ENCODE measurements at regions of chr2 and their contacts with region 1.

Region 1: DNA sequence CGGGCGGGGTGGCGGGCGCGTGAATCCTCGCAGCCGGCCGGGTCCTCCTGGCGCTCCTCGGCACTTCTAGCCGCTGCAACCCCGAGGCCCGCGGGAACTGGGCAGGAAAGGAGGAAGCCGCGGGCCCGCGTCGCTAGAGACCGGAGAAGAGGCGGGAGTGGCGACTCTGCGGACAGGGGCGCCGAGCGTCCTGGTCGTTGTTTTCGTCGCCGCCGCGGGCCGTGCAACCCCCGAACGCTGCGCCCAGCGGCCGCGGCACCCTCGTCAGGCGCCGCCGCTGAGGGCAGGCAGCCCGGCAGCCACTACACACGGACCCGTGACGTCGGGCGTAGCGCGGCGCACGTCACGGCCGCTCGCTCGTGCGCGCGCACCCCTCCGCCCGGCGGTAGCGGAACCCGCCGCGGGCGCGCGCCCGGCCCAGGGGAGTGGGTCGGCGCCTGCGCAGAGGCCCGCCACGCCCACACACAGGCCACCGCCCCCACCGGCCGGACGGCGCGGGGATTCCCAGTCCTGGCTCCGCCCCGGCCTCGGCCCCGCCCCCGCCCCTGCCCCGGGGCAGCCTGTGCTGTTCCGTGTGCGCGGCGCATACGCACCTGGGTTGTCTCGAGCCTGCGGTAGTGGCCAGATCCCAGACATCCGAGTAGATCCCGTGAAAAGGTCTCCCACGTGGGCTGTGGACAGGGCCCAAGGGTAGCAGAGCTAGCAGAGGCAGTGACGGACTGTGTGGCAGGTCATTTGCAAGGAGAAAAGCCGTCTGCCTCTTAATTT is at the start of gene MAP3K2:
- DNase-seq: peak; percentile 94 to 98
- ATAC-seq: peak; percentile 76 to 90 (median 76)
- H3K4me3 ChIP-seq: peak within 1 kb of the TSS; percentile 95
- H3K4me3 Mint-ChIP-seq: peak within 1 kb of the TSS; percentile 92
- H3K27ac ChIP-seq: peak within 1 kb of the TSS; percentile 100
- H3K27ac Mint-ChIP-seq: peak within 1 kb of the TSS; percentile 96 to 97
- H3K4me1 ChIP-seq: peaks cover 29% of the 10 kb centered on the region
- H3K4me1 Mint-ChIP-seq: peaks cover 45 to 46% of the 10 kb centered on the region in 2 donors
- H3K27me3 ChIP-seq: no peaks in the 10 kb centered on the region
- H3K27me3 Mint-ChIP-seq: no peaks in the 10 kb centered on the region
- CTCF ChIP-seq: no peak
- total RNA-seq, gene MAP3K2: 99.4 to 109 (median 106) TPM

Region 2: DNA sequence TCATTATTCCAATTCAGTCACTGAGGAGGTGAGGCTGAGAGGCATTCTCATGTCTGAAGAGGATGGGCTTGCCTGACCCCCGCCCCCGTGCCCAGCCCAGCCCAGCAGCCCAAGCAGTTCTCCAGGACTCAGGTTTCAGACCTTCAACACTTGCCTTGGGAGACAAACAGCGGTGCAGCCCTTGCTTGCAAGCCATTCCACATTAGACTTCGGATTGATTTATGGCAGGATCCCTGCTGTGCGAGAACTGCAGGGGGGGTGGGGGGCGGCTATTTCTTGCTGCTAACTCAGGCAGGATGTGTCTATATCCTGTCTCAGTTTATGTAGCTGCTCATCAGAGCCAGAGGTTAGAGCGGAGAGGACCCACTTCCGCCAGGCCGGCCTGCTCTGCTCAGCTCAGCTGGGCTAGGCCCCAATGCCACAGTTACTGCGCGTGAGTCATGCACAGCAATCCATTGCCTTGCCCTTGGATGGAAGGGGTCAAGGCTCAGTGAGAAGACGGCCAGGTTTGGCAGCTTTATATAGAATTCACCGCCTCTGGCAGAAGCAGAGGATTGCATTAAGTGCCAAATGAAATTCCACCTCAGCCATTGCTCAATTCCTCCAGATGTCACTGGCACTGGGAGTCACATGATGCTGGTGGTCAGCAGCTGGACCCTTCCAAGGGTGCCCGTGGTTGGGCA is 730.1 kb before region 1 on chr2:
- intact Hi-C with region 1: loop called (anchors 5 kb)
- DNase-seq: peak; percentile 68 to 84
- ATAC-seq: peak; percentile 73 to 87 (median 84)
- H3K4me3 ChIP-seq: peak overlapping the region; percentile 81
- H3K4me3 Mint-ChIP-seq: peak overlapping the region; percentile 94
- H3K27ac ChIP-seq: peak overlapping the region; percentile 93
- H3K27ac Mint-ChIP-seq: peak overlapping the region; percentile 89 to 97
- H3K4me1 ChIP-seq: peaks cover 68% of the 10 kb centered on the region
- H3K4me1 Mint-ChIP-seq: peaks cover 72 to 73% of the 10 kb centered on the region in 2 donors
- H3K27me3 ChIP-seq: no peaks in the 10 kb centered on the region
- H3K27me3 Mint-ChIP-seq: no peaks in the 10 kb centered on the region
- CTCF ChIP-seq: no peak

Region 3: DNA sequence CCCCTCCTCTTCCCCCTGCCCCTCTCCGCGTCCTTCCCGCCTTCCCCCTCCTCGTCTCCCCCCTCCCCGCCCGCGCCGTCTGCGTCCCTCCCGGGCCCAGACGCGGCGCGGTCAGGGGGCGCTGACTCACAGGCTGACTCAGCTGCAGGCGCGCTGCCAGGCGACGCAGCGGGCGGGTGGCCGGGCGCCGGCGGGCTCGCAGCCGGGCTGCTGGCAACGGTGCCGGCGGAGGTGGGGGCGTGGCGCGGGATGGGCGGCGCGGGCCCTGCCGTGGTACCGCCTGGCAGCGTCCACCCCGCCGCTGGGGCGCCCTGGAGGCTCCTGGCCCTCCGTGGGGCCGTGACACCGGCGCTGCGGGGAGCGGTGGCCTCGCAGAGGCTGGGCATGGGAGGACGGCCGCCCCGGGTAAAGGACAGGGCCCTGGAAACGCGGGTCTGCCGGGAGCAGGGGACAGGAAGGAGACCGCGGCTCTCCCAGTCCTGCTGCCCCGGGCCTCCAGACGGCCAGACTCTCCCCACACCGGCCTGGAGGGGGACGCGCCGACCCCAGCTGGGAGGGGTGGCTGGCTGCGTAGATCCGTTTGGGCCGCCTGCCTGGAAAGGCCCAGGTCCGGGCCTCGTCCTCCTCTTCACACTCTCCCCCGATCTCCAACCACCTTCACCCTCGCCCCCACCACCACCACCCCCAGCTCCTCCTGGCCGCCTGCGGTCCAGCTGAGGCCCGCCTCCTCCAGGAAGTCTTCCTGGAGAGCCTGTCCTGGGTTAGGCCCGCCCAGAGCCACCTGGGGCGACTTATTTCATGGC is 20.4 kb after region 1 on chr2:
- intact Hi-C with region 1: loop called (anchors 1 kb)
- DNase-seq: peak; percentile 92 to 93
- ATAC-seq: peak; percentile 88 to 96 (median 93)
- H3K4me3 ChIP-seq: peak overlapping the region; percentile 30
- H3K4me3 Mint-ChIP-seq: peak overlapping the region; percentile 76
- H3K27ac ChIP-seq: no peak overlapping the region
- H3K27ac Mint-ChIP-seq: peak overlapping the region; percentile 74 to 88
- H3K4me1 ChIP-seq: peaks cover 10% of the 10 kb centered on the region
- H3K4me1 Mint-ChIP-seq: peaks cover 0 to 9% of the 10 kb centered on the region in 2 donors
- H3K27me3 ChIP-seq: no peaks in the 10 kb centered on the region
- H3K27me3 Mint-ChIP-seq: peaks cover 7 to 18% of the 10 kb centered on the region in 2 donors
- CTCF ChIP-seq: no peak

Region 4: DNA sequence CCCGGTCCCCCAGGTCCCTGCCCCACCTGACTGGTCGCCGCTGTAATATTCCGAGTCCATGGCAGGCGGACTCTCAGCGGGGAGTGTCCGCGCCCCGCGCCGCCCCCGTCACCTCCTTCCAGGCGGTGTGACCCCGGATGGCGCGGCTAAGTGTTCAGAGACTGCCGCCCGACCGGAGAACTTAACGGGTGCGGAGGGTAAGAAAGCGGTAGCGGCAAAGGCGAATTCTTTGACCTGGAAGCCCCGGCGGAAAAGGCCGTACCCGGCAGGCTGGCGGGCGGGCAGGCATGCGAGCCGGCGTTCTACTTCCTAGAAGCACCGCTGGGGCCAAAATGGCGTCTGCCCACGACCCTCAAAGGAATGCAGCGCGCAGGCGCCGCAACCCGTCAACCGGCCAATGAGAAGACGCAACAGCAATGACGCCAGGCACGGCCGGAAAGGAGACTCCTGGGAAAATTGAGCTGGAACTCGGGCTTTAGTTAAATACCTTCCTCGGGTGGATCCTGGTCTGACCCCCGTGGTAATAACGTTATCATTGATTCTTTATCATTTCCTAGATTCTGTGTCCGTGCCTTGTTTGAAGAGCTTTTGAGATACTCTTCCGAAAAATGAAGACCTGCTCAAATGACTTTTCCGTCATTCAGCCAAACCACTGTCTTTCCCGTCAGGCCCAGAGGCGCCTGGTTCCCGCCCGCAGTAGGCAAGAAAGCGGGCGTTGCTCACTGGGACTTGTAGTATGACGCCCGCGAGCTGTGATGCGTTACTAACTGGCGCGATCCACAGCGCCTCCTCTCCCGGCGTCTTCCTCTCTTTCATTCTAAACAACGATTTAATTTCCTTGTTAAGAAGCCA is 138.5 kb after region 1 on chr2 and contains the start of gene IWS1:
- intact Hi-C with region 1: loop called (anchors 5 kb)
- DNase-seq: peak; percentile 90 to 98
- ATAC-seq: peak; percentile 87 to 94 (median 90)
- H3K4me3 ChIP-seq: peak within 1 kb of the TSS; percentile 87
- H3K4me3 Mint-ChIP-seq: peak within 1 kb of the TSS; percentile 93
- H3K27ac ChIP-seq: peak within 1 kb of the TSS; percentile 94
- H3K27ac Mint-ChIP-seq: peak within 1 kb of the TSS; percentile 96 to 98
- H3K4me1 ChIP-seq: peaks cover 21% of the 10 kb centered on the region
- H3K4me1 Mint-ChIP-seq: peaks cover 37 to 43% of the 10 kb centered on the region in 2 donors
- H3K27me3 ChIP-seq: peaks cover 3% of the 10 kb centered on the region
- H3K27me3 Mint-ChIP-seq: peaks cover 9 to 13% of the 10 kb centered on the region in 2 donors
- CTCF ChIP-seq: peak; percentile 25
- total RNA-seq, gene IWS1: 21.7 to 27.1 (median 23.9) TPM

Region 5: GRCh38 chr2:127701193-127701650 is 313.4 kb after region 1 on chr2 and contains the start of gene SFT2D3:
- intact Hi-C with region 1: loop called (anchors 5 kb)
- DNase-seq: peak; percentile 83 to 95
- ATAC-seq: peak; percentile 75 to 87 (median 76)
- H3K4me3 ChIP-seq: peak within 1 kb of the TSS; percentile 61
- H3K4me3 Mint-ChIP-seq: peak within 1 kb of the TSS; percentile 93
- H3K27ac ChIP-seq: peak within 1 kb of the TSS; percentile 94
- H3K27ac Mint-ChIP-seq: peak within 1 kb of the TSS; percentile 97 to 98
- H3K4me1 ChIP-seq: peaks cover 33% of the 10 kb centered on the region
- H3K4me1 Mint-ChIP-seq: peaks cover 35 to 36% of the 10 kb centered on the region in 2 donors
- H3K27me3 ChIP-seq: no peaks in the 10 kb centered on the region
- H3K27me3 Mint-ChIP-seq: no peaks in the 10 kb centered on the region
- CTCF ChIP-seq: no peak
- total RNA-seq, gene SFT2D3: 5.5 to 6.6 (median 6.4) TPM

Region 6: DNA sequence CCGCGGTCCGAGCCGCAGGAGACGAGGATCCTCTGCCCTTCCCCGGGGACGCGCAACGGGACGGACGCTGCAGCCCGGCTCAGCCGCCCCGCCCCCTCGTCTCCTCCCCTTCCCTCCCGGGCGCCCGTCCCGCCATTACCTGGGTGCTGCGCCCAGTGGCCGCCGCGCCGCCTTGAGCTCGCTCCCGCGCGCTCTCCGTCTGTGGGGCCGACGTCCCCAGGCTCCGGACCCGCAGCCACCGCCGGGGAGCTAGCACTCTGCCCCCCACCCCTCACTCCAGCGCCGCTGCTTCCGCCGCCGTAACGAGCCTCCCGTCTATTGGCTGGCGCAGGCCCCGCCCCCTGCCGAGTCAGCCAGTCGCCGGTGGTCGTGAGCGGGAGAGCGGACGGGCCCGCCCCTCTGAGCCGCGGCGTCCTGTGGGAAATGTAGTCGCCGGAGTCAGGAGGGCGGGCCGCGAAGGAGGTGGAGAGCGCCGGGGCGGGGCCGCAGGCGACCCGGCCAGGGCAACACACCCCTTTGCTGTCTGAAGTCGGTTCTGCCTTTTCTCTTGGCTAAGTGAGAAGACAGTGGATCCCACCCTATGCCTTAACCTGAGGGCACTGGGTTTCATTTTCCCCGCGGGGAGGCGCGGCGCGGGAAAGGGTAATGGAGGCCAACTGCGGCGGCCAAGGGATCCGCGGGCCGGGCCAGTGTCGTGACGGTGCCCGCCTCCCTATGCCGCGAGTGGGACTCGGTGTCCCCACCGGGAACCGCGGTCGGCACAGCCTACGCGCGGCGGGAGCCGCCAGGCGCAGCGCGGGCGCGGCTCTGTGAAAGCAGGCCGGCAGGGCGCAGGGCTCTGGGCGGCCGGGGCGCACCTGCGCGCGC is 640.2 kb after region 1 on chr2 and contains the start of gene SAP130:
- intact Hi-C with region 1: loop called (anchors 5 kb)
- DNase-seq: peak; percentile 98
- ATAC-seq: peak; percentile 76 to 89 (median 78)
- H3K4me3 ChIP-seq: peak within 1 kb of the TSS; percentile 74
- H3K4me3 Mint-ChIP-seq: peak within 1 kb of the TSS; percentile 97
- H3K27ac ChIP-seq: peak within 1 kb of the TSS; percentile 75
- H3K27ac Mint-ChIP-seq: peak within 1 kb of the TSS; percentile 85 to 96
- H3K4me1 ChIP-seq: peaks cover 7% of the 10 kb centered on the region
- H3K4me1 Mint-ChIP-seq: peaks cover 9 to 26% of the 10 kb centered on the region in 2 donors
- H3K27me3 ChIP-seq: peaks cover 2% of the 10 kb centered on the region
- H3K27me3 Mint-ChIP-seq: peaks cover 6 to 13% of the 10 kb centered on the region in 2 donors
- CTCF ChIP-seq: no peak
- total RNA-seq, gene SAP130: 33.6 to 43.7 (median 36.2) TPM

Region 7: GRCh38 chr2:128090945-128091725 is 703.3 kb after region 1 on chr2 and contains the start of gene UGGT1:
- intact Hi-C with region 1: loop called (anchors 5 kb)
- DNase-seq: peak; percentile 89 to 98
- ATAC-seq: peak; percentile 94 to 99 (median 95)
- H3K4me3 ChIP-seq: peak within 1 kb of the TSS; percentile 94
- H3K4me3 Mint-ChIP-seq: peak within 1 kb of the TSS; percentile 96
- H3K27ac ChIP-seq: peak within 1 kb of the TSS; percentile 85
- H3K27ac Mint-ChIP-seq: peak within 1 kb of the TSS; percentile 94 to 96
- H3K4me1 ChIP-seq: peaks cover 6% of the 10 kb centered on the region
- H3K4me1 Mint-ChIP-seq: peaks cover 41 to 46% of the 10 kb centered on the region in 2 donors
- H3K27me3 ChIP-seq: no peaks in the 10 kb centered on the region
- H3K27me3 Mint-ChIP-seq: peaks cover 0 to 3% of the 10 kb centered on the region in 2 donors
- CTCF ChIP-seq: no peak
- total RNA-seq, gene UGGT1: 48.2 to 70.3 (median 60.7) TPM